AG04449 (cell line): ENCODE measurements at regions of chr20 and their contacts with region 1.

Region 1: DNA sequence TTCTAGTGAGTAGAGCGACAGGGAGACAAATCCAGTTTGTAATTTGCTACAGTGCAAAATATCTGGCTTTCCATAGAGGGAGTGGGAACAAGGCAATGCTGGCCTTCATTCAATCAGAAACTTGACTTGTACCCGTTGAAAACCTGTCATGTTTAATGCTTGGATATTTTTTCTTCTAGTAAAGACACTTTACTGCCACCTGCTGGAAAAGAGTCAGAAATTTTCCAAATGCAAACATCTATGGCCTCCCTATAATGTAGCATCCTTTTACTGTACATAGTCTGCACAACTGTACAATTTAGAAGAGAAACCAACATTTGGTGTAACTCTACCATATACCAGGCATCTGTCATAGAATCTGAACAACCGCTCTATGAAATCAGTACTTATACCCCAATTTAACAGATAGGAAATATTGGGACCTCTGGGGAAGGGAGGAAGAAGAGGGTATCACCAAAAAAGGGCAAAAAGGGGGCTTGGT is 16.7 kb upstream of the TBC1D20 start:
- DNase-seq: no peak
- H3K4me3 ChIP-seq: no peak overlapping the region
- CTCF ChIP-seq: peak; percentile 15

Region 2: DNA sequence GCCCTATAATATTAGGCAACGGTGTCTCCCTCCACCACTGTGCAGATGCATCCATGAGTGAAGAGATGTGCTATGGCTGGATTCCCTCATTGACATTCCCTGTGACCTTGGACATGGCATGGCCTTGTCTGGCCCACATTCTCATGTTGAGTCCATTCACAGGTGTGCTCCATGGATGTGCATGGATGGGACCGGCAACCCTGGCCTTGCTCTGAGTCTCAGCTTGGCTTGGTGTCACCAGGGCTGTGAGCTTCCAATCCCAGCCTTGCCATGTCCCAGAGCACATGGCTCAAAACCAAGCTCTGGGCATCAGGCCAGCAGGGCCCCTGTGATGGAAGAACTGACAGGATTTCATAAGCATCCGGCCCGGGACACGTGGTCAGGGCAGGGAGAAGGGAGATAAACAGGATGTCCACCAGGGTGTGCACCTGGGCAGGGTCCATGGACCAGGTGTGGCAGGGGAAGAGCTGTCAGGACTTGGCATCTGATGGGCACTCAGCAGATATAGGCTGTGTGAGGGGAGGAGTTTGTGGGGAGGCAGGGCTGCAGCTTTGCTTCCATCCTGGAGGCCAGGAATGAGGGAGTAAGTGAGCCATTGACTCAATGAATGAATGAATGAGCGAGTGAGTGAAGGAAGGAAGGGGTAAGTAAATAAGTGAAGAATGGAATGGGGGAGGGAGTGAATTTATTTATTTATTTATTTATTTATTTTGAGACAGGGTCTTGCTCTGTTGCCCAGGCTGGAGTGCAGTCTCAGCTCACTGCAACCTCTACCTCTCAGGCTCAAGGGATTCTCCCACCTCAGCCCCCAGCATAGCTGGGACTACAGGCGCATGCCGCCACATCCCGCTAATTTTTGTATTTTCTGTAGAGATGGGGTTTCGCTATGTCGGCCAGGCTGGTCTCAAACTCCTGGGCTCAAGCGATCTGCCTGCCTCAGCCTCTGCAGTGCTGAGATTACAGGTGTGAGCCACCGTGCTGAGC is 116.4 kb before region 1 on chr20:
- CTCF ChIA-PET with region 1: interaction called, 142 read pairs
- POLR2A ChIA-PET with region 1: no interaction called
- DNase-seq: no peak
- H3K4me3 ChIP-seq: no peak overlapping the region
- CTCF ChIP-seq: peak; percentile 42

Region 3: DNA sequence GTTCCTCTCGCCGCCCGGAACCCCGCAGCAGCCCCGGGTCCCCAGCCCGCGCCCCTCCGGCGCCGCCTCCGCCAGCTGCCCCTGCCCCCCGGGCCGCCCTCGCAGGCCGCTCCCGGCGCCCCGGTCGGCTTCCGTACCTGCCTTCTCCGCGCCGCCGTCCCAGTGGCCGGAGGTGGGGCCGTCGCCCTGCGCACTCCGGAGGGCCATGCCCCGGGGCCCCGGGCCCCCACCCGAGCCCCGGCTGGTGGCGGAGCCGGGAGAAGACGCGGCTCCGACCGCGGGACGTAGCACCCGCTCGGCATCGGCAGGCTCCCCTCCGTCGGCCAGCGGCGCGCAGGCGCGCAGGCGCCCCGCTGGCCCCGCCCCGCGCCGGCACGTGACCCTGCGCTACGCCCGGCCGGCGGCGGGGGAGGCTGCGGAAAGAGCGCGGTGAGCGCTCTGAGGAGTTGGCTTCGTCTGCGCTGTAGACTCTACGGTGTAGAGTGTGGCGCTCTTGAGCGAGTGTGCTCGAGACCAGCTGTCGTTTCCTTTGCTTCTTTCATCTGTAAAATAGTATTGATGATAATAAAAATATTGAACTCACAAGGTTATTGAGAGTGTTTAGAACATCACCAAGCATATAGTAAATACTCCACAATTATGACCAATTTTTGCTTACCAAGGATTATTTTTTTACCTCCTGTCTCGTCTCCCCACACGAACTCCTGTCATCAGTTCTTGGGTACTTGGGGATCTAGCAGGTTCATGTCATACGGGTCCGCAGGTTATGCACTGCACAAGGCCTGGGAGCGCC is 16.6 kb before region 1 on chr20 and contains the start of gene TBC1D20:
- CTCF ChIA-PET with region 1: interaction called, 15 read pairs
- POLR2A ChIA-PET with region 1: interaction called, 3 read pairs
- DNase-seq: no peak
- H3K4me3 ChIP-seq: peak within 1 kb of the TSS; percentile 80
- CTCF ChIP-seq: peak; percentile 29

Region 4: DNA sequence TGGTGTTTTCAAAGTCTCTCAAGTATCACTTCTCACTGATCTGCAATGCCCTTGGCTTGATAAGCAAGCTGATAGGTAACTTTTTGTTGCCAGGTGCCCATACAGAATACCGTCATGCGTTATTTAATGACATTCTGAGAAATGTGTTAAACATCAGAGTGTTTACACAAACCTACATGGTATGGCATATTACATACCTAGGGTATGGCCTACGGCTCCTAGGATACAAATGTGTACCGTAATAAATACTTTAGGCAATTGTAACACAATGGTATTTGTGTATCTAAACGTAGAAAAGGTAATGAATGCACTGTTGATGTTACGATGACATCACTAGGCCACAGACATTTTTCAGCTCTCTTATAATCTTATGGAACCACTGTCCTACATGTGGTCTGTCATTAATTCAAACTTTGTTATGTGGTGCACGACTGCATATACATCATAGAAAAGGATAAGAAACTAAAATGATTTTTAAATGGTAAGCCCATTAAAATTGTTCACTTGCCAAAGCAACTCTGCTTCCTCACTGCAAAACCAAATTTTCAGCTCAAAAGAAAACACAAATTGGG is 28.9 kb after region 1 on chr20:
- CTCF ChIA-PET with region 1: interaction called, 12 read pairs
- POLR2A ChIA-PET with region 1: no interaction called
- DNase-seq: no peak
- H3K4me3 ChIP-seq: no peak overlapping the region
- CTCF ChIP-seq: no peak

Region 5: GRCh38 chr20:625360-625932 is 146.5 kb after region 1 on chr20:
- CTCF ChIA-PET with region 1: no interaction called
- POLR2A ChIA-PET with region 1: no interaction called
- DNase-seq: no peak
- H3K4me3 ChIP-seq: no peak overlapping the region
- CTCF ChIP-seq: no peak

Region 6: DNA sequence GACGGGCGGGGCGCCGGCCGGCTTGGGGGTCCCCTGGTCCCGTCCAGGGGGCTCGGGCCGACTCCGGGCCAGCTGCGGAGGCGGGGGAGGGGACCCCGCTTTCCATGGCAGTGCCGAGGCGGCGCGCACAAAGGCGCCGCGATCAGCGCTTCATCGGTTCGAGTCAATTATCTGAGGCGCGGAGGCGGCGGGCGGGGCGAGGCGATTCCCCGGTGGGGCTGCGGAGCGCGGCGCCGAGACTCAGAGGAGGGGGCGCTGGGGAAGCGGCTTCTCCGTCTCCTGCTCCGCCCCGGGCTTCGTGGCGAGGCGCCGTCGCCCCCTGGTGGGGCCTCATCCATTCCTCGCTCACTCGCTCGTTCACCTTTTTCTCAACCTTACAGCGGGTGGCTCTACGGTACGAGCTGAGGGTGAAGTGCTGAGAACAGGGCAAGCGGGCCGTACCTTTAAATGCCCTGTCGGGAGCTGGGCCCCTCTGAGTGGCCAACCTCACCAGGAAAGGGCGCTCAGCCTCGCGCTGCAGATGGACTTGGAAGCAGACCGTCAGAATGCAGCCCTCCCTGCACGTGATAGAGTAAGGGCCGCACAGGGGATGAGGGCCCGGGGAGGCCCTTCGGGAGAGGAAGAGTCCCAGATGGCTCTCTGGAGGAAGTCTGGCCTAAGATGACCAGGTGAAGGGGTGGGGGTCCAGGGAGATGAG is 249.4 kb after region 1 on chr20:
- CTCF ChIA-PET with region 1: no interaction called
- POLR2A ChIA-PET with region 1: no interaction called
- DNase-seq: no peak
- H3K4me3 ChIP-seq: peak overlapping the region; percentile 38
- CTCF ChIP-seq: peak; percentile 70

Region 7: DNA sequence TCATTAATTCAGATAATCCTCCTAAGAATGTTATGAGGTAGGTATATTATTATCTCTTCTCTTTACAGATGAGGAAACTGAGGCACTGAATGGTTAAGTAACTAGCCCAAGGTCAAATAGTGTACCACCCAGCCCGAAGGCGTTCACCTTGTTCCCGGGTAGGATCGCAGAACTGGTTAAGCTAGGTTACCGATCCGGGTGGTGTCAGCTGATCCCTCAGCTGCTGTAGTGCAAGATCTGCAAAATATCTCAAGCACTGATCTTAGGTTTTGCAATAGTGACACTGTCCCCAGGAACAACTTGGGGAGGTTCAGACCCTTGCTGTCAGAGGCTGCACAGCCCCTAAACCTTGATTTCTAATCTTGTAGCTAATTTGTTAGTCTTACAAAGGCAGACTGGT is 261.2 kb after region 1 on chr20:
- CTCF ChIA-PET with region 1: interaction called, 10 read pairs
- POLR2A ChIA-PET with region 1: no interaction called
- DNase-seq: no peak
- H3K4me3 ChIP-seq: no peak overlapping the region
- CTCF ChIP-seq: no peak